Prostate gland (tissue), 2 donors: ENCODE measurements at regions of chr3 and their contacts with region 1.

Region 1: GRCh38 chr3:150227839-150228238 is 180.3 kb upstream of the TSC22D2 start:
- DNase-seq: peak; percentile 12
- H3K4me3 ChIP-seq: no peak overlapping the region
- H3K27ac ChIP-seq: no peak overlapping the region
- H3K4me1 ChIP-seq: no peaks in the 10 kb centered on the region
- H3K27me3 ChIP-seq: no peaks in the 10 kb centered on the region
- CTCF ChIP-seq: peak in 3 of 4 experiments; percentile 27 to 52 (median 43)
- POLR2A ChIP-seq: no peak

Region 2: GRCh38 chr3:150371741-150372254 is 144.0 kb after region 1 on chr3:
- intact Hi-C with region 1: loop called (anchors 10 kb)
- DNase-seq: peak; percentile 43
- H3K4me3 ChIP-seq: no peak overlapping the region
- H3K27ac ChIP-seq: peak overlapping the region; percentile 41 to 53
- H3K4me1 ChIP-seq: no peaks in the 10 kb centered on the region
- H3K27me3 ChIP-seq: no peaks in the 10 kb centered on the region
- CTCF ChIP-seq: no peak
- POLR2A ChIP-seq: no peak